MCF 10A (cell line): ENCODE measurements at regions of chr2 and their contacts with region 1.

Region 1: GRCh38 chr2:68709421-68709911 is 25.1 kb upstream of the ARHGAP25 start:
- DNase-seq: peak; percentile 60
- H3K4me3 Mint-ChIP-seq: no peak overlapping the region
- H3K27ac Mint-ChIP-seq: no peak overlapping the region
- H3K4me1 Mint-ChIP-seq: no peaks in the 10 kb centered on the region
- H3K27me3 Mint-ChIP-seq: peaks cover 43% of the 10 kb centered on the region
- CTCF ChIP-seq: peak; percentile 66

Region 2: DNA sequence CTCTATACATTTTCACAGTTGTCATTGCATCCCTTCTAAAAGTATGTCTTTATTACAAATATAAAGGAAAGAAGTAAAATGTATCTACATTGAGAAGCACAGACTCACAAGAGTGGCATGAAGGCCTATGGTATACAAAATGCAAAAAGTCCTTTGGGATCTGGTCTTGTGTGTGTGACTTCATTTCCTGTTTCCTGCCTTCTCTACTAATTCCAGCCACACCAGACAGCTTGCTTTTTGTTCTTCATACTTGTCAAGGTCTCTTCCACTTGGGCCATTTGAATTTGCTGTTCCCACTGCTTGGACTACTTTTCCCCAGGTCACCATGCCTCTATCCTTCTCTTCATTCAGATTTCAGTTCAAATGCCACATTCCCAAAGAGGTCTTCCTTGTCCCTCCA is 558.4 kb before region 1 on chr2:
- CTCF ChIA-PET with region 1: no interaction called
- POLR2A ChIA-PET with region 1: no interaction called
- intact Hi-C with region 1: no loop called
- DNase-seq: no peak
- H3K4me3 Mint-ChIP-seq: no peak overlapping the region
- H3K27ac Mint-ChIP-seq: no peak overlapping the region
- H3K4me1 Mint-ChIP-seq: peaks cover 9% of the 10 kb centered on the region
- H3K27me3 Mint-ChIP-seq: no peaks in the 10 kb centered on the region
- CTCF ChIP-seq: no peak

Region 3: GRCh38 chr2:68244456-68244855 is 465.0 kb before region 1 on chr2:
- CTCF ChIA-PET with region 1: no interaction called
- POLR2A ChIA-PET with region 1: no interaction called
- intact Hi-C with region 1: no loop called
- DNase-seq: no peak
- H3K4me3 Mint-ChIP-seq: no peak overlapping the region
- H3K27ac Mint-ChIP-seq: no peak overlapping the region
- H3K4me1 Mint-ChIP-seq: peaks cover 14% of the 10 kb centered on the region
- H3K27me3 Mint-ChIP-seq: no peaks in the 10 kb centered on the region
- CTCF ChIP-seq: no peak

Region 4: GRCh38 chr2:68487773-68488355 is 221.6 kb before region 1 on chr2:
- CTCF ChIA-PET with region 1: interaction called, 35 read pairs
- POLR2A ChIA-PET with region 1: no interaction called
- intact Hi-C with region 1: no loop called
- DNase-seq: peak; percentile 43
- H3K4me3 Mint-ChIP-seq: peak overlapping the region; percentile 28
- H3K27ac Mint-ChIP-seq: no peak overlapping the region
- H3K4me1 Mint-ChIP-seq: peaks cover 6% of the 10 kb centered on the region
- H3K27me3 Mint-ChIP-seq: no peaks in the 10 kb centered on the region
- CTCF ChIP-seq: peak; percentile 40

Region 5: DNA sequence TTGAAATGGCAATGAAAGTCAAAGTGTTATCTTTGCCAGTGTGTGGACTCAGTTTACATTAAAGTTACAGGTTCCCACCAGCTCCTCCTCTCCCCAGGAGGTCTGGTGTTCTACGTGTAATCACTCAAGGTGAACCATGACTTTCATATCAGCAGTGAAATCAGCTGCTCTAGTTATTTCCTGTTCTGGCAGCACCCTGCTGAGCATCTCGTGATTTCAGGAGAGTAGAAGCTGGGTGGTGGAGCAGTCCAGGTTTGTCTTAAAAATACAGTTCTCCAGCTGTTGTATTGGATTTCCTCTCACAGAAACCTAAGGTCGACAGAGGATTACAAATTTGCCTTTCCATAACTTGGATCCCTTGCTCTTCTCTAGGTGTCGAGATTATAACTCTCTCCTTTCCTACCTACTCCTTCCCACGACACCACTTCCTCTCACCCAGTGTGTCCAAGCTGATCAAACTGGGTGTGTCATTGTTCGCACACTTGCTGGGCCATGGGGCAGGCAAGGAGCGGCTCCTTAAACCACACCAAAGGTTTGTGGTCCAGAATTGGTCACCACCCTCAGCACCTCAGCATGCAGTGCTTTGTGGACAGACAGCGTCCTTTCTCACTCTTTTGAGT is 12.1 kb after region 1 on chr2:
- CTCF ChIA-PET with region 1: interaction called, 53 read pairs
- POLR2A ChIA-PET with region 1: interaction called, 3 read pairs
- intact Hi-C with region 1: no loop called
- DNase-seq: no peak
- H3K4me3 Mint-ChIP-seq: no peak overlapping the region
- H3K27ac Mint-ChIP-seq: no peak overlapping the region
- H3K4me1 Mint-ChIP-seq: peaks cover 8% of the 10 kb centered on the region
- H3K27me3 Mint-ChIP-seq: no peaks in the 10 kb centered on the region
- CTCF ChIP-seq: no peak

Region 6: GRCh38 chr2:68742626-68743415 is 33.4 kb after region 1 on chr2:
- CTCF ChIA-PET with region 1: interaction called, 28 read pairs
- POLR2A ChIA-PET with region 1: no interaction called
- intact Hi-C with region 1: no loop called
- DNase-seq: no peak
- H3K4me3 Mint-ChIP-seq: no peak overlapping the region
- H3K27ac Mint-ChIP-seq: no peak overlapping the region
- H3K4me1 Mint-ChIP-seq: peaks cover 23% of the 10 kb centered on the region
- H3K27me3 Mint-ChIP-seq: no peaks in the 10 kb centered on the region
- CTCF ChIP-seq: no peak

Region 7: GRCh38 chr2:68901199-68901960 is 191.9 kb after region 1 on chr2:
- CTCF ChIA-PET with region 1: interaction called, 31 read pairs
- POLR2A ChIA-PET with region 1: no interaction called
- intact Hi-C with region 1: loop called (anchors 2 kb)
- DNase-seq: peak; percentile 34
- H3K4me3 Mint-ChIP-seq: no peak overlapping the region
- H3K27ac Mint-ChIP-seq: no peak overlapping the region
- H3K4me1 Mint-ChIP-seq: no peaks in the 10 kb centered on the region
- H3K27me3 Mint-ChIP-seq: no peaks in the 10 kb centered on the region
- CTCF ChIP-seq: peak; percentile 27

Region 8: DNA sequence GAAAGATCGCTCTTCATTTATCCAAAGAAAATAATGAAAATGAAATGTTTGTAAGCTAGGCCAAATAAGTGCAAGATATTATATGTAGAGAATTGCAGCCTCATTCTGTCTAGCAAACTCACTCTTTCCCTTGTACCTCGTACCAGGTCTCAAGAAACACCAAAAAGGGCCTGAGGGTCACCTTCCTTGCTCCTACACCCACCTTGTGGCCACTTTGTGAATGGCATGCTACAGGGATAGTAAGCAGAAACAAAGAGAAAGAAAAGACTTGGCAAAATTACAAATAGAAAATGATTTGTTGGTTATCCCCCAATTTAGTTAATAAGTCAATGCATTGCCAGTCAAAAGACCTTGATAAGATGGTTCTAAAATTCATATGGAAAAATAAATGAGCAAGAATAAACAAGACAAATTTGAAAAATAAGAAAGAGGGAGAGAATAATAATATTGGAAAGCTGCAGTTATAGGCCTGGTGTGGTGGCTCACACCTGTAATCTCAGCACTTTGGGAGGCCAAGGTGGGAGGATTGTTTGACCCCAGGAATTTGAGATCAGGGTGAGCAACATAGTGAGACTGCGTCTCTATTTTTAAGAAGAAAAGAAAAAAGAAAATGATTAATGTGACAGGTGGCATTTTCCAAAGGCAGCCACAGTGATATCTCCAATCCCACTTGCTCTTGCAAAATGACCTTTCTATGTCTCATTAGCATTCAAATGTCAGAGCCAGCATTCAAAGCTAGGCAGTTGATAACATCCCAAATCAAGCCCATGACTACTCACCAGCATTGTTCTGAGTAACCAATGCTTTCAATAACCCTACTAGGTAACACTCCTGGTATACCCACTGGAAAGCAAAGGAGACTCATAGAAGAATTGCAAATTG is 200.6 kb after region 1 on chr2:
- CTCF ChIA-PET with region 1: interaction called, 31 read pairs
- POLR2A ChIA-PET with region 1: no interaction called
- intact Hi-C with region 1: no loop called
- DNase-seq: peak; percentile 84
- H3K4me3 Mint-ChIP-seq: no peak overlapping the region
- H3K27ac Mint-ChIP-seq: no peak overlapping the region
- H3K4me1 Mint-ChIP-seq: peaks cover 18% of the 10 kb centered on the region
- H3K27me3 Mint-ChIP-seq: no peaks in the 10 kb centered on the region
- CTCF ChIP-seq: peak; percentile 89